ENCODE measurements at regions of chr1 and their contacts with region 1.

Region 1: DNA sequence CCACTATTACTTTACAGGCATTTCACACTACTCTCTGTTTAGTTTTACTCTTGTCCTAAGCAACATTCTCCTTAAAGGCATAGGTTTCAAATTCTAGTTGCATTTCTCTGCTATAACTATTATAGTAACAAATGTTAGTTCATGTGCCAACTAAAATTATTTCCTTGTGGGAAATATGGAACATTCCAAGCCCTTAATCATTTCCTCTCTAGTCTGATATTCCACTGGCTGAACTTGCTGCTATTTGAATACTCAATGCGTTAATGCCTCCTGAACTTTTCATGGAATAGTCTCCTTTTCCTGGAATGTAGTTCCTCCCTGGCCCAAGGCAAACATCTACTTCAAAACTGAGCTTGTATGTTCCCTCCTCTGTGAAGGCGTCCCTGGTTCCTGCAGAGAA is 19.3 kb upstream of the TBX19 start:
- DNase-seq: peak; percentile 90
- H3K4me3 ChIP-seq: peak overlapping the region in 1 of 3 experiments; percentile 39
- H3K27ac ChIP-seq: peak overlapping the region; percentile 84
- H3K4me1 ChIP-seq: peaks cover 28% of the 10 kb centered on the region
- H3K27me3 ChIP-seq: no peaks in the 10 kb centered on the region
- CTCF ChIP-seq: no peak
- POLR2A ChIP-seq: no peak

Region 2: DNA sequence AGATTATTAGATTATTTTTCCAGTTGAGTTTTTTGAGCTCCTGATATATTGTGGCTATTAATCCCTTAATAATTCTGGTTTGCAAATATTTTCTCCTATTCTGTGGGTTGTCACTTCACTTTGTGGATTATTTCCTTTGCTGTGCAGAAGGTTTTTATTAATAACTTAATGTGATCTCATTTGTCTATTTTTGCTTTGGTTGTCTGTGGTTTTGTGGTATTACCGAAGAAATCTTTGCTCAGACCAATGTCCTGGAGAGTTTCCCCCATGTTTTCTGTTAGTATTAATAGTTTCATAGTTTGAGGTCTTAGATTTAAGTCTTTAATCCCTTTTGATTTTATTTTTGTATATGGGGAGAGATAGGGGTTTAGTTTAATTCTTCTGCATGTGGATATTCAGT is 12.2 kb after region 1 on chr1:
- CTCF ChIA-PET with region 1: no interaction called
- POLR2A ChIA-PET with region 1: no interaction called
- dilution Hi-C with region 1: no loop called
- intact Hi-C with region 1: no loop called
- DNase-seq: no peak
- H3K4me3 ChIP-seq: no peak overlapping the region
- H3K27ac ChIP-seq: no peak overlapping the region
- H3K4me1 ChIP-seq: no peaks in the 10 kb centered on the region
- H3K27me3 ChIP-seq: no peaks in the 10 kb centered on the region
- CTCF ChIP-seq: no peak
- POLR2A ChIP-seq: no peak

Region 3: DNA sequence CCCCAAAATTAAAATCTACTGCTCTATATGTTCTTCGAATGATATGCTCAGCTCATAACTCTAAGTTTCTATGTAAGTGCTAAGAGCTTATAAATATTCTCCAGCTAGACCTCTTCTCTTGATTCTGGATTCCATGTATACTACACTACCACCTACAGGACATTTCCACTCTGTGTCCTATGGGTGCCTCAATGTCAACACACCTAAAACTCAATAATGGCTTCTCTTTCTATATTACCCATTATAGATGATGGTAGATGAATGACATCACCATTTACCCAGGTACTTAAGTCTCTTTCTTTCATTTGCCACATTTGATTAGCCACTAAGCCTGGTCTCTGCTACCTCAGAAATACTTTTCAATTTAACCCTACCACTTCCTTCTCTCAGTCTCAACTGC is 60.6 kb after region 1 on chr1:
- CTCF ChIA-PET with region 1: no interaction called
- POLR2A ChIA-PET with region 1: no interaction called
- dilution Hi-C with region 1: no loop called
- intact Hi-C with region 1: loop called (anchors 1 kb)
- DNase-seq: peak; percentile 56
- H3K4me3 ChIP-seq: no peak overlapping the region
- H3K27ac ChIP-seq: no peak overlapping the region
- H3K4me1 ChIP-seq: peaks cover 18% of the 10 kb centered on the region
- H3K27me3 ChIP-seq: no peaks in the 10 kb centered on the region
- CTCF ChIP-seq: peak; percentile 4 to 40
- POLR2A ChIP-seq: no peak

Measured in endothelial cell of umbilical vein (primary cell).